ENCODE measurements at regions of chr7 and their contacts with region 1.

Region 1: GRCh38 chr7:39465055-39465929 is 100.9 kb upstream of the YAE1 start:
- DNase-seq: peak; percentile 75
- H3K4me3 Mint-ChIP-seq: no peak overlapping the region
- H3K27ac Mint-ChIP-seq: no peak overlapping the region
- H3K4me1 Mint-ChIP-seq: peaks cover 2% of the 10 kb centered on the region
- H3K27me3 Mint-ChIP-seq: peaks cover 13% of the 10 kb centered on the region

Region 2: GRCh38 chr7:38932509-38933168 is 532.7 kb before region 1 on chr7:
- CTCF ChIA-PET with region 1: interaction called, 8 read pairs
- intact Hi-C with region 1: loop called (anchors 1 kb)
- DNase-seq: peak; percentile 70
- H3K4me3 Mint-ChIP-seq: no peak overlapping the region
- H3K27ac Mint-ChIP-seq: no peak overlapping the region
- H3K4me1 Mint-ChIP-seq: no peaks in the 10 kb centered on the region
- H3K27me3 Mint-ChIP-seq: no peaks in the 10 kb centered on the region

Region 3: DNA sequence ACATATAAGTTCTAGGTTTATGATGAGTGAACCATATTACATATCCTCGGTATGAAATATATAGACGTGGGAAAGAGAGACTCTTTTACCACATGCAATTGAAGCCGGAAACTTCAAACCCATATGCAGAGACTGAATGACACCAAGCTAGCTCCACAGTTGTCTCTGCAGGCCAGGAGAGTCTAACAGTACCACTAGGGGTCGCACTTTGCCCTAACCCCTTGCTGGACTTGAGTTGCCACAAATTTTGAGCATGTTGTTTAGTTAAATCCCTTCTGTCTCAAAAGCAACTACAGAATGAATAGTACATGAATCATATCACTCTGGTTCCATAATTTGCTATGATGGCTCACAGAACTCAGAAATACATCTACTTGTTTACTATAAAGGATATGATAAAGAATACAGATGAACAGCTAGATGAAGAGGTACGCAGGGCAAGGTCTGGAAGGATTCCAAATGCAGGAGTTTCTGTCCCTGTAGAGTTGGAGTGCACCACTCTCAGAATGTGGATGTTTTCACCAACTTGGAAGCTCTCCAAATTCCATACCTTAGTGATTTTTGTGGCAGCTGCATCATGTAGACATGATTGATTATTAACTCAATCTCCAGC is 11.4 kb before region 1 on chr7:
- CTCF ChIA-PET with region 1: interaction called, 17 read pairs
- intact Hi-C with region 1: loop called (anchors 1 kb)
- DNase-seq: peak; percentile 75
- H3K4me3 Mint-ChIP-seq: no peak overlapping the region
- H3K27ac Mint-ChIP-seq: no peak overlapping the region
- H3K4me1 Mint-ChIP-seq: no peaks in the 10 kb centered on the region
- H3K27me3 Mint-ChIP-seq: peaks cover 7% of the 10 kb centered on the region

Region 4: GRCh38 chr7:39504963-39505362 is 39.7 kb after region 1 on chr7:
- CTCF ChIA-PET with region 1: interaction called, 4 read pairs
- intact Hi-C with region 1: loop called (anchors 5 kb)
- DNase-seq: peak; percentile 32
- H3K4me3 Mint-ChIP-seq: no peak overlapping the region
- H3K27ac Mint-ChIP-seq: no peak overlapping the region
- H3K4me1 Mint-ChIP-seq: peaks cover 12% of the 10 kb centered on the region
- H3K27me3 Mint-ChIP-seq: no peaks in the 10 kb centered on the region

Region 5: GRCh38 chr7:39517240-39517639 is 51.9 kb after region 1 on chr7:
- CTCF ChIA-PET with region 1: no interaction called
- intact Hi-C with region 1: loop called (anchors 1 kb)
- DNase-seq: no peak
- H3K4me3 Mint-ChIP-seq: no peak overlapping the region
- H3K27ac Mint-ChIP-seq: no peak overlapping the region
- H3K4me1 Mint-ChIP-seq: no peaks in the 10 kb centered on the region
- H3K27me3 Mint-ChIP-seq: peaks cover 3% of the 10 kb centered on the region

Region 6: DNA sequence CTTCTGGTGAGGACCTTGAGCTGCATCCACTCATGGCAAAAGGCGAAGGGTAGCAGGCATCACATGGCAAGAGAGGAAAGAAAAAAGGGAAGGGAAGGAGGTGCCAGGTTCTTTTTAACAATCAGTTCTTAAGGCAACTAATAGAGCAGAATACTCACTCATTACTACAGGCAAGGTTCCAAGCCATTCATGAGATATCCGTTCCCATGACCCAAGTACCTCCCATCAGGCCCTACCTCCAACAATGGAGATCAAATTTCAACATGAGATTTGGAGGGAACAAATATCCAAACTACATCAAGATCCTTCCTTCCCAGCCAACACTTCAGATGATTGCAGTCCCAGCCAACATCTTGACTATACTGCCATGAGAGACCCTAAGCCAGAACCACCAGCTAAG is 62.0 kb after region 1 on chr7:
- CTCF ChIA-PET with region 1: no interaction called
- intact Hi-C with region 1: no loop called
- DNase-seq: no peak
- H3K4me3 Mint-ChIP-seq: no peak overlapping the region
- H3K27ac Mint-ChIP-seq: no peak overlapping the region
- H3K4me1 Mint-ChIP-seq: no peaks in the 10 kb centered on the region
- H3K27me3 Mint-ChIP-seq: peaks cover 8% of the 10 kb centered on the region

Measured in activated naive CD4-positive, alpha-beta T cell treated with anti-CD3 and anti-CD28 coated beads for 36 hours (primary cell).